Uterus (tissue), 4 donors: ENCODE measurements at regions of chr3 and their contacts with region 1.

Region 1: GRCh38 chr3:147881933-147882332 is 472.8 kb downstream of the ZIC1 start:
- DNase-seq: no peak
- H3K4me3 ChIP-seq: no peak overlapping the region
- H3K27ac ChIP-seq: no peak overlapping the region
- H3K4me1 ChIP-seq: no peaks in the 10 kb centered on the region
- H3K27me3 ChIP-seq: no peaks in the 10 kb centered on the region
- CTCF ChIP-seq: no peak
- POLR2A ChIP-seq: no peak

Region 2: GRCh38 chr3:146679191-146679590 is 1202.7 kb before region 1 on chr3:
- intact Hi-C with region 1: loop called (anchors 10 kb)
- DNase-seq: no peak
- H3K4me3 ChIP-seq: no peak overlapping the region
- H3K27ac ChIP-seq: no peak overlapping the region
- H3K4me1 ChIP-seq: no peaks in the 10 kb centered on the region
- H3K27me3 ChIP-seq: no peaks in the 10 kb centered on the region
- CTCF ChIP-seq: no peak
- POLR2A ChIP-seq: no peak

Region 3: DNA sequence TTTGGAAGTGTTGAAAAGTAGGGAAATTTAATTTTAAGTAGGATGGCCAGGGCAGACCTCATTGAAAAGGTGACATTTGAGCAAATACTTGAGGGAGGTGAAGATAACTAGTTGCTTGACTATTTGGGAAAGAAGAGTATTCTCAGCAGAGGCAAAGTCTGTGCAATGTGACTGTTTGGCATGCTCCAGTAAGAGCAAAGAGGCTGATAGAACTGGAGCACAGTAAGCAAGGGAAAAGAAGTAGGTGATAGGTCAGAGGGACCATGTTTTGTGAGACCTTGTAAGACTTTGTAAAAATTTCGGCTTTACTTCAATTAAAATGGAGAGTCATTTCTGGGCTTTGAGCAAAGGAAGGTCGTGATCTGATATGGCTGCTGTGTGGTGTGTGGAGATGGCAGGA is 137.0 kb before region 1 on chr3:
- intact Hi-C with region 1: no loop called
- DNase-seq: no peak
- H3K4me3 ChIP-seq: no peak overlapping the region
- H3K27ac ChIP-seq: no peak overlapping the region
- H3K4me1 ChIP-seq: no peaks in the 10 kb centered on the region
- H3K27me3 ChIP-seq: no peaks in the 10 kb centered on the region
- CTCF ChIP-seq: no peak
- POLR2A ChIP-seq: no peak